Posterior cingulate gyrus (tissue), 11 donors: ENCODE measurements at regions of chr5 and their contacts with region 1.

Region 1: GRCh38 chr5:74927336-74927735 is 61.1 kb upstream of the FAM169A start:
- DNase-seq: no peak

Region 2: DNA sequence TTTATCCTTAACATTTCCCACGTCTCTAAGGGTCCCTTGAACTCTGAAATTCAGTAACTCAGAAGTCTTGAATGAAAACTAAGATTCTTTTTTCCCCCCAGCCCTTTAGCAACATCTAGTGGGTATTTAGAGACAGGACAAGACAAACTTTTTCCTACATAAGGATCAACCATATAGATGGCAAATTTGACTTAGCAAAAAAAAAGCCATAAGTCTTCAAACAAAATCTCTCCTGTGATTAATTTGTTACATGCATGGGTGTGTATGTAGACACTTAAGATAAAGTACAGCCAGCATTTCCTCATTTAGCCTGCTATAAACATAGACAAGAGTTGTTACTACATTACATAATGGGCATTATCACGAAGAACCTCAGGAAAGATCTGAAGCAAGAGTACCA is 338.4 kb after region 1 on chr5:
- intact Hi-C with region 1: loop called (anchors 5 kb)
- DNase-seq: no peak